ENCODE measurements at regions of chr4 and their contacts with region 1.

Region 1: GRCh38 chr4:31737419-31737818 is 1017.2 kb downstream of the PCDH7 start:
- DNase-seq: no peak
- ATAC-seq: no peak
- H3K4me3 ChIP-seq: no peak overlapping the region
- H3K4me3 Mint-ChIP-seq: no peak overlapping the region
- H3K27ac ChIP-seq: no peak overlapping the region
- H3K27ac Mint-ChIP-seq: no peak overlapping the region
- H3K4me1 ChIP-seq: no peaks in the 10 kb centered on the region
- H3K4me1 Mint-ChIP-seq: no peaks in the 10 kb centered on the region
- H3K27me3 ChIP-seq: no peaks in the 10 kb centered on the region
- H3K27me3 Mint-ChIP-seq: no peaks in the 10 kb centered on the region
- CTCF ChIP-seq: no peak

Region 2: DNA sequence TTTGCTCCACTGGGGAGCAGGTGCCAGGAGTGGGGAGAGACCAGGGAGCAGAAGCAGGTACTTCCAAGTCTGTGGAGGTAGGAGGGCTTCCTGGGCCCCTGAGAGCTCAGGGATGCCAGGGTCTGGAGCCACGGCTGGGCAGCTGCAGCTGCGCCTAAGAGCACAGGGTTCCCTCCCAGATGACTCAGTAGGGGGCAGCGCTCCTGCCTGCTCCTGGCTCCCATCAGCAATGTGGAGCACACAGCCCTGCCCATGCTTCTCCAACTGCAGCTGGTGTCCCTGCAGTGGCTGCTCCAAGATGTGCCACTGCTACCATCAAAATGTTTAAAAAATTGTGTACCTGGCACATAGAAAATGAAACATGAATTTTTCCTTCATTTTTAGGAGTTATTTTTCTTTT is 11.0 kb after region 1 on chr4:
- CTCF ChIA-PET with region 1: no interaction called
- POLR2A ChIA-PET with region 1: no interaction called
- intact Hi-C with region 1: loop called in 1 of 2 experiments (anchors 2 kb)
- DNase-seq: no peak
- ATAC-seq: no peak
- H3K4me3 ChIP-seq: no peak overlapping the region
- H3K4me3 Mint-ChIP-seq: no peak overlapping the region
- H3K27ac ChIP-seq: no peak overlapping the region
- H3K27ac Mint-ChIP-seq: no peak overlapping the region
- H3K4me1 ChIP-seq: no peaks in the 10 kb centered on the region
- H3K4me1 Mint-ChIP-seq: no peaks in the 10 kb centered on the region
- H3K27me3 ChIP-seq: no peaks in the 10 kb centered on the region
- H3K27me3 Mint-ChIP-seq: no peaks in the 10 kb centered on the region
- CTCF ChIP-seq: no peak

Region 3: DNA sequence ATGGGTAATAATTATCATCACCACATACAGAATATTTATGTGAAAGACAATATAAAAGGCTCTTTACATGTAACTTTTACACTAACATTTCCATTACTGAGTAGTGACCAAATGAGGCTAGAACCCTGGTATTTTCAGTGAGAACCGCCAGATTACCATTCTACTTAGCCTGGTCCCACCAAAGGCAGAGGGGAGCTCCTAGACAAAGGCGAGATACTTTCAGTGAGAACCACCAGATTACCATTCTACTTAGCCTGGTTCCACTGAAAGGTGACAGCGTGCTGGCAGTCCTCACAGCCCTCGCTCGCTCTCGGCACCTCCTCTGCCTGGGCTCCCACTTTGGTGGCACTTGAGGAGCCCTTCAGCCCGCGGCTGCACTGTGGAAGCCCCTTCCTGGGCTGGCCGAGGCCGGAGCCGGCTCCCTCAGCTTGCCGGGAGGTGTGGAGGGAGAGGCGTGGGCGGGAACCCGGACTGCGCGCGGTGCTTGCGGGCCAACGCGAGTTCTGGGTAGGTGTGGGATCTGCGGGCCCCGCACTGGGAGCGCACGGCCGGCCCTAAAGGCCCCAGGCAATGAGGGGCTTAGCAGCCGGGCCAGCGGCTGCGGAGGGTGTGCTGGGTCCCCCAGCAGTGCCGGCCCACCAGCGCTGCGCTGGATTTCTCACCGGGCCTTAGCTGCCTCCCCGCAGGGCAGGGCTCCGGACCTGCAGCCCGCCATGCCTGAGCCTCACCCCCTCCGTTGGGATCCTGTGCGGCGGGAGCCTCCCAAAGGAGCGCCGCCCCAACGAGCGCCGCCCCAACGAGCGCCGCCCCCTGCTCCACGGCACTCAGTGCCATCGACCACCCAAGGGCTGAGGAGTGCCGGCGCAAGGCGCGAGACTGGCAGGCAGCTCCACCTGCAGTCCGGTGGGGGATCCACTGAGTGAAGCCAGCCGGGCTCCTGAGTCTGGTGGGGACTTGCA is 258.8 kb after region 1 on chr4:
- CTCF ChIA-PET with region 1: no interaction called
- POLR2A ChIA-PET with region 1: no interaction called
- intact Hi-C with region 1: no loop called
- DNase-seq: peak in 1 of 9 experiments; percentile 11
- ATAC-seq: no peak
- H3K4me3 ChIP-seq: no peak overlapping the region
- H3K4me3 Mint-ChIP-seq: no peak overlapping the region
- H3K27ac ChIP-seq: no peak overlapping the region
- H3K27ac Mint-ChIP-seq: no peak overlapping the region
- H3K4me1 ChIP-seq: no peaks in the 10 kb centered on the region
- H3K4me1 Mint-ChIP-seq: no peaks in the 10 kb centered on the region
- H3K27me3 ChIP-seq: no peaks in the 10 kb centered on the region
- H3K27me3 Mint-ChIP-seq: no peaks in the 10 kb centered on the region
- CTCF ChIP-seq: no peak